AG04450 (cell line): ENCODE measurements at regions of chr5 and their contacts with region 1.

Region 1: DNA sequence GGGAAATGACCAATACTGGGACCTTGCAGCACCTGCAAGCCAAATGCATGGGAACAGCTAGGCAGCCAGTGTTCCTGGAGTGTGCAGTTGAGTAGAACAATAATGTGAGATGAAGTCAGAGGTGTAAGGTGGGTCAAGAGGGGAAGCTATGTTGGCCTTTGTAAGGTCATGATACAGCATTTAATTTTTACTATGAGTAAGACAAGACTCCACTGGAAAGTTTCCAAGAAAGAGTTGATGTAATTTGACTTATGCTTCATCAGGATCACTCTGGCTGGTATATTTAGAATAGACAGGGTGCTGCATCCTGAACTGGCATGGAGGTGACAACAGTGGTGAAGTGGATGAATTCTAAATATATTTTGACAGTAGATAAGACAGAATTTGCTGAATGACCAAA is 744.8 kb downstream of the KCTD16 start:
- DNase-seq: no peak
- H3K4me3 ChIP-seq: no peak overlapping the region
- H3K27ac ChIP-seq: no peak overlapping the region
- H3K27me3 ChIP-seq: no peaks in the 10 kb centered on the region
- CTCF ChIP-seq: no peak

Region 2: DNA sequence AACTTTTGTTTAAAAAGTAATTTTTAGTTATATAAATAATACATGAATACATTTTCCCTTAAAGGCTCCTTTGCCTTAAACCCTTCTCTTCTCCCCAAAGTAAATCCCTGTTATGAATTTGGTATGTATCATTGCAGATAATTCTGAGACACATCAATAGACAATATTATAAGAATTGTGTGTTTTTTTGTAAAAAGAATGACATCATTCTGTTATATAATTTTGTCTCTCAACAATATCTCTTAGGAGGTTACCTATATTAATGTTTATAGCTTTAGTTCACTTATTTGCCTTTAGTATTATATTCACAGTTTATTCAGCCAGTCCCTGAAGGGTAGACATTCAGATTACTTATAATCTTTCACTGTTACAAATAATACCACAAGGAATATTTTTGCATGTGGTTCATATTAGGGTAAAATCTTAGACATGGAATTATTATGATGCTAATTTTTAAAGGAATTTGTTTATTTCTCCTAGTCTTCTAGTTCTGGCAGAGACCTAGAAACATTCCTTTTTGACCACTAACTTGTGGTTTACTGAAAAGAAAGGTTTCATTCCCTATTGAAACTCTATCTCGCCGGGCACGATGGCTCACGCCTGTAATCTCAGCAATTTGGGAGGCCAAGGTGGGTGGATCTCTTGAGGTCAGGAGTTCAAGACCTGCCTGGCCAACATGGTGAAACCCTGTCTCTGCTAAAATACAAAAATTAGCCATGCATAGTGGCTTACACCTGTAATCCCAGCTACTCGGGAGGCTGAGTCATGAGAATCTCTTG is 639.2 kb before region 1 on chr5:
- CTCF ChIA-PET with region 1: interaction called, 12 read pairs
- POLR2A ChIA-PET with region 1: no interaction called
- DNase-seq: no peak
- H3K4me3 ChIP-seq: no peak overlapping the region
- H3K27ac ChIP-seq: no peak overlapping the region
- H3K27me3 ChIP-seq: no peaks in the 10 kb centered on the region
- CTCF ChIP-seq: no peak